Endothelial cell of umbilical vein (primary cell): ENCODE measurements at regions of chr1 and their contacts with region 1.

Region 1: GRCh38 chr1:117367047-117368018 is at the start of gene MAN1A2:
- DNase-seq: peak; percentile 83
- H3K4me3 ChIP-seq: peak within 1 kb of the TSS; percentile 92 to 96 (median 96)
- H3K27ac ChIP-seq: peak within 1 kb of the TSS; percentile 66
- H3K4me1 ChIP-seq: peaks cover 33% of the 10 kb centered on the region
- H3K27me3 ChIP-seq: no peaks in the 10 kb centered on the region
- CTCF ChIP-seq: no peak
- POLR2A ChIP-seq: peak; percentile 49
- total RNA-seq, gene MAN1A2: 36.2 and 38.3 TPM in 2 replicates

Region 2: GRCh38 chr1:117416546-117417125 is 49.3 kb after region 1 on chr1:
- CTCF ChIA-PET with region 1: no interaction called
- POLR2A ChIA-PET with region 1: no interaction called
- dilution Hi-C with region 1: no loop called
- intact Hi-C with region 1: loop called (anchors 5 kb)
- DNase-seq: peak; percentile 28
- H3K4me3 ChIP-seq: no peak overlapping the region
- H3K27ac ChIP-seq: no peak overlapping the region
- H3K4me1 ChIP-seq: peaks cover 5% of the 10 kb centered on the region
- H3K27me3 ChIP-seq: no peaks in the 10 kb centered on the region
- CTCF ChIP-seq: no peak
- POLR2A ChIP-seq: no peak

Region 3: GRCh38 chr1:117466761-117467160 is 99.4 kb after region 1 on chr1:
- CTCF ChIA-PET with region 1: no interaction called
- POLR2A ChIA-PET with region 1: no interaction called
- dilution Hi-C with region 1: no loop called
- intact Hi-C with region 1: loop called (anchors 1 kb)
- DNase-seq: peak; percentile 86
- H3K4me3 ChIP-seq: peak overlapping the region in 2 of 3 experiments; percentile 52 to 53
- H3K27ac ChIP-seq: peak overlapping the region; percentile 89
- H3K4me1 ChIP-seq: peaks cover 28% of the 10 kb centered on the region
- H3K27me3 ChIP-seq: no peaks in the 10 kb centered on the region
- CTCF ChIP-seq: no peak
- POLR2A ChIP-seq: no peak

Region 4: GRCh38 chr1:117605774-117606648 is 238.7 kb after region 1 on chr1 and contains the start of gene TENT5C:
- CTCF ChIA-PET with region 1: no interaction called
- POLR2A ChIA-PET with region 1: no interaction called
- dilution Hi-C with region 1: no loop called
- intact Hi-C with region 1: loop called (anchors 1 kb)
- DNase-seq: peak; percentile 96
- H3K4me3 ChIP-seq: peak within 1 kb of the TSS; percentile 68 to 87 (median 82)
- H3K27ac ChIP-seq: no peak within 1 kb of the TSS
- H3K4me1 ChIP-seq: peaks cover 15% of the 10 kb centered on the region
- H3K27me3 ChIP-seq: peaks cover 29 to 44% of the 10 kb centered on the region in 2 experiments
- CTCF ChIP-seq: no peak
- POLR2A ChIP-seq: peak; percentile 61
- total RNA-seq, gene TENT5C: 0.12 and 0.22 TPM in 2 replicates

Region 5: GRCh38 chr1:117929173-117929989 is 562.0 kb after region 1 on chr1 and contains the starts of genes GDAP2 and WDR3:
- CTCF ChIA-PET with region 1: no interaction called
- POLR2A ChIA-PET with region 1: no interaction called
- dilution Hi-C with region 1: no loop called
- intact Hi-C with region 1: loop called (anchors 10 kb)
- DNase-seq: peak; percentile 95
- H3K4me3 ChIP-seq: peak within 1 kb of the TSS; percentile 61 to 93 (median 77)
- H3K27ac ChIP-seq: peak within 1 kb of the TSS; percentile 52
- H3K4me1 ChIP-seq: peaks cover 16% of the 10 kb centered on the region
- H3K27me3 ChIP-seq: no peaks in the 10 kb centered on the region
- CTCF ChIP-seq: no peak
- POLR2A ChIP-seq: no peak
- total RNA-seq, gene GDAP2: 20.7 and 21.5 TPM in 2 replicates
- total RNA-seq, gene WDR3: 27.7 and 29.3 TPM in 2 replicates